HCT116 (cell line): ENCODE measurements at regions of chr1 and their contacts with region 1.

Region 1: DNA sequence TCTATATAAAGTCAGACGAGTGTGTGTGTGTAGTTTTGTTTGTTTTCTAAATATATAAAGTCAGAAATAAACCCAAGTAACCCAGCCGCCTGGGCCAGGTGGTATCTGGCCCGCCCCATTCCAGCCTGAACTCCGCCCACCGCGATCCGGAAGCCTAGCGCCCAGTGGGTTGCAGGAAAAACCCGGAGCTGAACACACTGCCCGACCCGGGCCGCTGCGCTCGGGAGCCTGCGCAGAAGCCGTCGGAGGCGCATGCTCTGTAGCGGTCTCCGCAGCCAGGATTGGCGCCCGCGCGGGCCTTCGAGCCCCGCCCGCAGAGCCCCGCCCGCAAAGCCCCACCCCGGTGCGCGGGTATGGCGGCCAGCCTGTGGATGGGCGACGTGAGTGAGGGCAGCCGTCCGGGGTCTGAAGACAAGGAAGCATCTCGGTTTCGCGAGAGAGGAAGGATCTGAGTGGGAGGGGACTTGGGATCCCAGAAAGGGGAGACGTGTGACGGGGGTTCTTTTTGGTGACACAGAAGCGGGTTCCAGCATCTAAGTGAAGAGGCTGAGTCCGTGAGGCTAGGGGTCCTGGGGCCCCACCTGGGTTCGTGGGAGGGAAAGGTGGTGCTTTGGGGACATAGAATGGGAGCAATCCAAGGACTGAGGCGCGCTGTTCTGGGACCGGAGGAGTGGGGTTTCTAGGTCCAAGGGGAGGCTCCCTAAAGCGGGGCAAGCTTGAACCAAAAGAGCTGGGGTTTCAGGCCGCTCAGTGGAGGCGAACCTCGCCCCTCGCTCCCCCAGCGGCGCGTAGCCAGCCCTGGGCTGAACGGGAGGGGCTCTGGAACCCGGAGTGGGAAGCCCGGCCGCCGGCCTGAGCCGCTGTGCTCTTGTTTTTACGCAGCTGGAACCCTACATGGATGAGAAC is at the start of gene TRNAU1AP:
- DNase-seq: peak; percentile 91
- ATAC-seq: peak; percentile 92
- H3K4me3 ChIP-seq: peak within 1 kb of the TSS; percentile 85 to 99
- H3K27ac ChIP-seq: peak within 1 kb of the TSS; percentile 90
- H3K4me1 ChIP-seq: peaks cover 6 to 22% of the 10 kb centered on the region in 2 experiments; a peak in 3 of 4 replicates
- H3K27me3 ChIP-seq: no peaks in the 10 kb centered on the region
- CTCF ChIP-seq: no peak
- POLR2A ChIP-seq: peak; percentile 78
- RAD21 ChIP-seq: no peak
- total RNA-seq, gene TRNAU1AP: 29.7 TPM

Region 2: DNA sequence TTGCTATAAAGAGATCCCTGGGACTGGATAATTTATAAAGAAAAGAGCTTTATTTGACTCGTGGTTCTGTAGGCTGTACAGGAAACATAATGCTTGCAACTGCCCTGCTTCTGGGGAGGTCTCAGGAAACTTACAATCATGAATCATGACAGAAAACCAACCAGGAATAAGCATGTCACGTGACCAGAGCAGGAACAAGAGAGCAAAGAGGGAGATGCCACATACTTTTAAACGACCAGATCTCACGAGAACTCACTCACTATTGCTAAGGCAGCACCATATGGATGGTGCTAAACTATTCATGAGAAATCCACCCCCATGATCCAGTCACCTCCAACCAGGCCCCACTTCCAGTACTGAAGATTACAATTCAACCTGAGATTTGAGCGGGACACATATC is 96.9 kb before region 1 on chr1:
- CTCF ChIA-PET with region 1: no interaction called
- POLR2A ChIA-PET with region 1: no interaction called
- RAD21 ChIA-PET with region 1: no interaction called
- intact Hi-C with region 1: no loop called
- DNase-seq: no peak
- ATAC-seq: 0 out of 2 replicates have a peak, but pooled peaks have one; percentile 27
- H3K4me3 ChIP-seq: no peak overlapping the region
- H3K27ac ChIP-seq: no peak overlapping the region
- H3K4me1 ChIP-seq: peaks cover 9 to 33% of the 10 kb centered on the region in 2 experiments
- H3K27me3 ChIP-seq: no peaks in the 10 kb centered on the region
- CTCF ChIP-seq: no peak
- POLR2A ChIP-seq: no peak
- RAD21 ChIP-seq: no peak

Region 3: GRCh38 chr1:28581536-28582247 is 28.7 kb after region 1 on chr1:
- CTCF ChIA-PET with region 1: interaction called, 6 read pairs
- POLR2A ChIA-PET with region 1: interaction called, 14 read pairs
- RAD21 ChIA-PET with region 1: no interaction called
- intact Hi-C with region 1: no loop called
- DNase-seq: peak; percentile 90
- ATAC-seq: peak; percentile 79
- H3K4me3 ChIP-seq: peak overlapping the region; percentile 97 to 99
- H3K27ac ChIP-seq: peak overlapping the region; percentile 93
- H3K4me1 ChIP-seq: peaks cover 9 to 29% of the 10 kb centered on the region in 2 experiments; a peak in 3 of 4 replicates
- H3K27me3 ChIP-seq: no peaks in the 10 kb centered on the region
- CTCF ChIP-seq: 0 out of 6 replicates have a peak, but pooled peaks of 1 of the 3 experiments have one; percentile 2
- POLR2A ChIP-seq: peak; percentile 99
- RAD21 ChIP-seq: no peak

Region 4: DNA sequence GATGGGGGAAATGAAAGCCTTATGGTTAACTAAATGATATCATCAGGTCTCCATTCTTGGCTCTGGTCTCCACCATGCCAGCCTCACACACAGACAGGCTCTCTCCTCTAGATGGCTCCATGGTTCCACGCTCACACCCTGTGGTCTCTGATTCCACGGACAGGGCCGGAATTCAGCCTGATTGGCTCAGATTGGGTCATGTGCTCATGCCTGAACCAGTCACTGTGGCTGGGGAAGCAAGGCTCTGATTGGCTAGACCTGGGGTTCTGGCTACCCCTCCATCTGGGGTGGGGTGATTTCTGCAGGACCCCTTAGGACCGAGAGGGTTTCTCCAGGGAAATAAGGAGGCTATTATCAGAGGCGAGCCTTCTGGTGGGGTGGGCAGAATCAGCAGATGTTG is 960.3 kb after region 1 on chr1:
- CTCF ChIA-PET with region 1: no interaction called
- POLR2A ChIA-PET with region 1: no interaction called
- RAD21 ChIA-PET with region 1: no interaction called
- intact Hi-C with region 1: no loop called
- DNase-seq: peak; percentile 84
- ATAC-seq: peak; percentile 100
- H3K4me3 ChIP-seq: no peak overlapping the region
- H3K27ac ChIP-seq: no peak overlapping the region
- H3K4me1 ChIP-seq: no peaks in the 10 kb centered on the region
- H3K27me3 ChIP-seq: peaks cover 25% of the 10 kb centered on the region
- CTCF ChIP-seq: peak; percentile 80 to 89 (median 82)
- POLR2A ChIP-seq: no peak
- RAD21 ChIP-seq: peak; percentile 99